Adrenal gland (tissue), 19 donors: ENCODE measurements at regions of chr1 and their contacts with region 1.

Region 1: DNA sequence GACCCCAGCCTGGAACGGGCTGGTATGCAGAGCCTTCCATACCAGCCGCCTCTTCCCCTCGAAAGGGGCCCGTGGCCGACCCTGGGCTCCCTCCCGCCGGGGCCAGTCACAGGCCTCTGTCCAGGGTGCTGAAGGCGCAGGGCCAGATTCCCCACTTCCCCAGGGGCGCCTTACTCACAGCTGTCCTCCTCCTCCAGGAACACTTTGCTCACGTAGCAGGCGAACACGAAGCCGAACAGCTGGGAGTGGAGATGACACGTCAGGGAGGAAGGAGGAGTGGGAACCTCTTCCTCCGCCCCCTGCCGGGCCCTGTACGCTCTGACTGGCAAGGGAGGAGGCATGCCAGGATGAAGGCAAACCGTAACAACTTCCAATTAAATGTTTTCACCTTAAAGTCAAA is 57.3 kb downstream of the NKAIN1 start:
- DNase-seq: peak; percentile 84 to 93 (median 90)
- H3K4me3 ChIP-seq: peak overlapping the region in 1 of 4 donors; percentile 39
- H3K27ac ChIP-seq: peak overlapping the region in 2 of 5 donors; percentile 15 to 54
- H3K4me1 ChIP-seq: peaks cover 10 to 15% of the 10 kb centered on the region in 2 donors
- H3K27me3 ChIP-seq: no peaks in the 10 kb centered on the region
- CTCF ChIP-seq: peak in 5 of 6 experiments; percentile 29 to 46 (median 44)
- POLR2A ChIP-seq: no peak

Region 2: GRCh38 chr1:31064718-31065309 is 117.5 kb before region 1 on chr1:
- intact Hi-C with region 1: no loop called
- DNase-seq: peak in 4 of 7 donors; percentile 22 to 41 (median 28)
- H3K4me3 ChIP-seq: peak overlapping the region; percentile 21 to 89 (median 88)
- H3K27ac ChIP-seq: peak overlapping the region; percentile 42 to 96 (median 91)
- H3K4me1 ChIP-seq: peaks cover 18 to 35% of the 10 kb centered on the region in 2 donors
- H3K27me3 ChIP-seq: no peaks in the 10 kb centered on the region
- CTCF ChIP-seq: no peak
- POLR2A ChIP-seq: no peak

Region 3: GRCh38 chr1:31111290-31111977 is 70.9 kb before region 1 on chr1:
- intact Hi-C with region 1: no loop called
- DNase-seq: peak in 6 of 7 donors; percentile 52 to 84 (median 74)
- H3K4me3 ChIP-seq: no peak overlapping the region
- H3K27ac ChIP-seq: peak overlapping the region in 1 of 5 donors; percentile 15
- H3K4me1 ChIP-seq: peaks cover 0 to 8% of the 10 kb centered on the region in 2 donors
- H3K27me3 ChIP-seq: no peaks in the 10 kb centered on the region
- CTCF ChIP-seq: no peak
- POLR2A ChIP-seq: no peak

Region 4: GRCh38 chr1:31335007-31335406 is 152.7 kb after region 1 on chr1:
- intact Hi-C with region 1: loop called (anchors 5 to 10 kb)
- DNase-seq: peak in 2 of 7 donors; percentile 14 to 25
- H3K4me3 ChIP-seq: no peak overlapping the region
- H3K27ac ChIP-seq: no peak overlapping the region
- H3K4me1 ChIP-seq: peaks cover 0 to 4% of the 10 kb centered on the region in 2 donors
- H3K27me3 ChIP-seq: no peaks in the 10 kb centered on the region
- CTCF ChIP-seq: peak; percentile 40 to 70 (median 61)
- POLR2A ChIP-seq: no peak

Region 5: GRCh38 chr1:31422505-31423319 is 240.4 kb after region 1 on chr1:
- intact Hi-C with region 1: loop called (anchors 5 kb)
- DNase-seq: peak; percentile 74 to 91 (median 82)
- H3K4me3 ChIP-seq: no peak overlapping the region
- H3K27ac ChIP-seq: peak overlapping the region in 4 of 5 donors; percentile 13 to 60 (median 57)
- H3K4me1 ChIP-seq: no peaks in the 10 kb centered on the region
- H3K27me3 ChIP-seq: no peaks in the 10 kb centered on the region
- CTCF ChIP-seq: peak; percentile 86 to 96 (median 94)
- POLR2A ChIP-seq: no peak